AG04449 (cell line): ENCODE measurements at regions of chr1 and their contacts with region 1.

Region 1: DNA sequence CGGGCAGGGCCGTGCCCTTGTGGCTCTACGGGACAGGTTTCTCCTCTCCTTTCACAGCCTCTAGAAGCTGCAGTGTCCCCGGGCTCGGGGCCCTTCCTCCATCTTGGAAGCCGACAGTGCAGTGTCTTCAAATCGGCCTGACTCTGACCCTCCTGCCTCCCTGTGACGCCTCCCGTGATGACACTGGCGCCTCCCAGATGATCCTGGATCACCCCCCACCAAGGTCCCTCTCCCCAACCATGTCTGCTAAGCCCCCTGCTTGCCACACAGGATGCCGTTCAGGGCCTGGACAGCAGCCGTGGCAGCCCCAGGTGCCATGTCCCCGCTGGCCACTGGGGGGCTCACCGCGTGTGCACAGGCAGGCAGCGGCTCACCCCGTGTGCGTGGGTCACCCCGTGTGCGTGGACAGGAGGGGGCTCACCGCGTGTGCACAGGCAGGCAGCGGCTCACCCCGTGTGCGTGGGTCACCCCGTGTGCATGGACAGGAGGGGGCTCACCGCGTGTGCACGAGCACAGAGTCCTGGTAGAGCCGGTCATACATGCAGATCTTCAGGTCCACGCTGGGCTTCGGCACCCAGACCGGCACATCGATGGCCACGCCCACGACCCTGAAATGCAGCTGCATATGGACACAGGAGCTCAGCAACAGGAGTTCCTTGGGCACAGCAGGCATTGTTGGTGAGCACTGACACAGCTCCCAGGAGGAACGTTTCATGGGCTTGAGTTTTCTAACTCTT is 24.9 kb upstream of the TMEM52 start:
- DNase-seq: no peak
- H3K4me3 ChIP-seq: no peak overlapping the region
- CTCF ChIP-seq: peak; percentile 89

Region 2: DNA sequence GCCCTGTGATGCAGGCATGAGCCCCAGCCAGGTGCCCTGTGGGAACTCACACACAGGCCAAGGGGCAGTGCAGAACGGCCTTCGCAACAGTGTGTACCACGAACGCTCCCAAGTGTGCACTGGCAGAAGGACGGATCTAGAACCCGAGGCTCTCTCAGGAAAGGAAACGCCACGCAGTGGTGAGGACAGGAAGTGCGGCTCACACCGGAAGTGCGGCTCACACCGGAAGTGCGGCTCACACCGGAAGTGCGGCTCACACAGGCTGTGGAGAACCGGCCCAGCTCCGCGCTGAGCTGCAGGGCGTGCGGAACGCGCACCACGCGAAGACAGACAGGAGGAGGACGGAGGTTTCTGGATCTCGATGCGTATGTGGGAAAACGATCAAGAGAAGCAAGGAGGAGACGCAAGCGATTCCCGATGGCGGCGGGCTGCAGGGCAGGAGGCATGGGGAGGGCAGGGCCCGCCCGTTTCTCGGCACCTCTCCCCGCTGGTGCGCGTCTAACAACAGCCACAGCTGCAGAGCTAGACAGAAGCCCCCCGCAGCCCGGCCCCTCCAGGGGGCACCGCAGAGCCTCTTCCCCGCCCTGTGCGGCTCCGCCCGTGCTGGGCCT is 10.9 kb after region 1 on chr1:
- CTCF ChIA-PET with region 1: interaction called, 12 read pairs
- POLR2A ChIA-PET with region 1: no interaction called
- DNase-seq: no peak
- H3K4me3 ChIP-seq: no peak overlapping the region
- CTCF ChIP-seq: peak; percentile 5

Region 3: GRCh38 chr1:1959840-1960479 is 16.0 kb after region 1 on chr1:
- CTCF ChIA-PET with region 1: interaction called, 11 read pairs
- POLR2A ChIA-PET with region 1: no interaction called
- DNase-seq: no peak
- H3K4me3 ChIP-seq: no peak overlapping the region
- CTCF ChIP-seq: peak; percentile 84

Region 4: GRCh38 chr1:2255420-2256369 is 311.7 kb after region 1 on chr1:
- CTCF ChIA-PET with region 1: no interaction called
- POLR2A ChIA-PET with region 1: no interaction called
- DNase-seq: no peak
- H3K4me3 ChIP-seq: no peak overlapping the region
- CTCF ChIP-seq: no peak